Right cardiac atrium (tissue), 5 donors: ENCODE measurements at regions of chr6 and their contacts with region 1.

Region 1: DNA sequence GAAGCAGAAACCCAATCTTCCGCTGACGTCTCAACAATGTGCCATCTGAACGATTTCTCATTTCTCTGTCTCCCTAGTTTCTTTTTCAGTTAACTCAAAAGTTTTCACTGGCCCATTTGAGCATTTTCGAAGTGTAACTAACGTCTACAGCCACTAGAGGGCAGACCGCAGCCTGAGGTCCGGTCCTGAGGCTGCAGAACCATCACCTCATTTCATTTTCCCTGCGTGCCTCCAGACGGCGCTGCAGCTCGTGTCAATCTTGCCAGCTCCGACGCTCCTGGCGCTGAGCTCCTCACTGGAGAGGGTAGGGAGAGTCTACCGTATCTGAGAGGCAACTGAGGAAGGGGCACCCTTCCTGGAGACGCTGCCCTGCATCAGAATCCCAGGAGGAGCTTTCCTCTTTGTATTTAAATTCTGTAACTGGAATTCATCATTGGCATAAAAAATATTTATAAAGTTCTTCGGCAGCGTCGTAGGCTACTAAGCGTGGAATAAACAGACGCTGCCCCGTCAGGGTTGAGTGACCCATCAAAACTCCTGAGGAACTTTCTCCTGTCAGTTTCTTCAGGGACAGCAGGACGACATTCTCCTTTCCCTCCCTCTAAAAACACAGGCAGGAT is 28.5 kb upstream of the DTNBP1 start:
- DNase-seq: peak; percentile 84 to 92 (median 91)
- ATAC-seq: peak; percentile 98
- H3K4me3 ChIP-seq: peak overlapping the region; percentile 30
- H3K27ac ChIP-seq: no peak overlapping the region
- H3K4me1 ChIP-seq: no peaks in the 10 kb centered on the region
- H3K27me3 ChIP-seq: no peaks in the 10 kb centered on the region

Region 2: DNA sequence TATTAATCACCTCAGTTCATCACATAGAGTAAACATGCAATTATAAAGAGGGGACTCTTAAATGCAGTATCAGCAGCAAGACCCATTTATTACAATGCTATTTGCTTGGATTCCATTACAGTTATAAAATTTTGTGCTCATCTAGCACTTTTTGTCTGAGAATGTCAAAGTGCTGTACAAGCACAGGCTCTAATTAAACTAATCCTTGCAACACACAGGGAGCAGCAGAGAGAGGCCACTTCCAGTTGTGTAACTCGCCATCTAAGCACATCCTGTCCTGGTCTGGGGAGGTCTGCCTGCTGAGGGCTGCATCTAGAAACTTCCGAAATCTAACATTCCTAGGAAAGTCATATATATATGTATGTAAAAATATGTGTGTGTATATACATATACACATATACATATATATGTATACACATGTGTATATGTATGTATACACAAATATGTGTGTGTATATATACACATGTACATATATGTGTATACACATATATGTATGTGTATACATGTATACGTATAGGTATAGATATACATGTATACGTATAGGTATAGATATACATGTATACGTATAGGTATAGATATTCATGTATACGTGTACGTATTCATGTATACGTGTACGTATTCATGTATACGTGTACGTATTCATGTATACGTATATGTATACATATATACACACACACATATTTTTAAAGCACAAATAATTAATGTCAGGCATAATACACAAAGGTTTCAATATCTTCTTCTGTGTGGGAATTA is 581.8 kb before region 1 on chr6:
- intact Hi-C with region 1: no loop called
- DNase-seq: no peak
- ATAC-seq: peak in 1 of 2 donors; percentile 62
- H3K4me3 ChIP-seq: no peak overlapping the region
- H3K27ac ChIP-seq: no peak overlapping the region
- H3K4me1 ChIP-seq: no peaks in the 10 kb centered on the region
- H3K27me3 ChIP-seq: no peaks in the 10 kb centered on the region

Region 3: GRCh38 chr6:16108921-16109658 is 417.7 kb after region 1 on chr6:
- intact Hi-C with region 1: no loop called
- DNase-seq: peak in 2 of 3 donors; percentile 31 to 70
- ATAC-seq: peak in 1 of 2 donors; percentile 73
- H3K4me3 ChIP-seq: no peak overlapping the region
- H3K27ac ChIP-seq: no peak overlapping the region
- H3K4me1 ChIP-seq: peaks cover 5% of the 10 kb centered on the region
- H3K27me3 ChIP-seq: no peaks in the 10 kb centered on the region

Region 4: GRCh38 chr6:16128759-16129622 is 437.6 kb after region 1 on chr6 and contains the start of gene MYLIP:
- intact Hi-C with region 1: loop called in 1 of 4 experiments (anchors 5 kb)
- DNase-seq: peak; percentile 97 to 99 (median 99)
- ATAC-seq: peak; percentile 99
- H3K4me3 ChIP-seq: peak within 1 kb of the TSS; percentile 88
- H3K27ac ChIP-seq: peak within 1 kb of the TSS; percentile 95
- H3K4me1 ChIP-seq: peaks cover 2% of the 10 kb centered on the region
- H3K27me3 ChIP-seq: no peaks in the 10 kb centered on the region
- total RNA-seq, gene MYLIP: 12.6 to 25.9 (median 22.2) TPM

Region 5: DNA sequence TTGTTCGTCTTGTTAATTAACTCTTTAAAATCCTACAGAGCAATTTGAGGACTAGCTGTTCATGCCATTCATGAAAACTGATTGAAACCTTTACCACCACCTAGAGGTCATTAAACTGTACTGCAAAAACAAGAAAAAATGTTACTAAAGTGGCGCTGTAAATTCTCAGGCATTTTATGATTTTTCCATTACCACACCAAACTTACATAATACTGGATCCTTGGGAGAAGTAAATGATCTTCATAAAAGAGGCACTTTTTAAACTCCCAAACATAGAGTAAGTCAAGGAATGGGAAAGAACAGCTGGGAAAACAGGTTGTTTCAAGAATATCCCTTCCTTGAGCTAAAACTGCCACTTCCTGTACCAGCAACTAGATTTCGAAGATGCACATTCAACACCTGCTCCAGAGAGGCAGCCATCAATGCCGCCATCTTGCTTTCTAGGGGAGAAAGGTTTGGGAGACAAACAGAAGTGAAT is 491.9 kb after region 1 on chr6:
- intact Hi-C with region 1: loop called in 3 of 4 experiments (anchors 5 kb)
- DNase-seq: no peak
- ATAC-seq: no peak
- H3K4me3 ChIP-seq: no peak overlapping the region
- H3K27ac ChIP-seq: no peak overlapping the region
- H3K4me1 ChIP-seq: no peaks in the 10 kb centered on the region
- H3K27me3 ChIP-seq: no peaks in the 10 kb centered on the region

Region 6: DNA sequence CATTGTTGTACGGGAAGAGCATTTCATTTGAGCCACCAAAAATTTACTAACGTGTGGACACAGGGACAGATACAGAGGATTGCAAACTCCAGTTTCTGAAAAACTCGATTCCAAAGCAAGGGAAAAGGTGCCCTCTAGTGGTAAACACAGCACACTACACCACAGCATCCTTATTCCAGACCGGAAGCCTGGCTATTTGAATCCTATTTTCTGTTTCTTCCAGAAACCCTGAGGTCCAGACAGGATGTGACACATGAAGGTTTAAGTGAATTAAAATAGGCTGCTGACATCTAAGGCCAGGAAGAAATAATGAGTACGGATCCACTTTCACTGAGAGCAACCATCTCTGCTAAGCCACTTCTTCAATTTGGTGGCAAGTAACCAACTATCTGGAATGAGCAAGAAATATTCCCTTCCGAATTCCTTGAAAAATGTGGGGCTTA is 515.3 kb after region 1 on chr6:
- intact Hi-C with region 1: loop called (anchors 1 to 5 kb)
- DNase-seq: peak in 1 of 3 donors; percentile 18
- ATAC-seq: peak; percentile 70 to 81
- H3K4me3 ChIP-seq: no peak overlapping the region
- H3K27ac ChIP-seq: no peak overlapping the region
- H3K4me1 ChIP-seq: no peaks in the 10 kb centered on the region
- H3K27me3 ChIP-seq: no peaks in the 10 kb centered on the region